Gastrocnemius medialis (tissue), 4 donors: ENCODE measurements at regions of chr7 and their contacts with region 1.

Region 1: GRCh38 chr7:7686811-7687508 is 31.4 kb downstream of the RPA3 start:
- DNase-seq: no peak
- ATAC-seq: no peak
- H3K4me3 ChIP-seq: no peak overlapping the region
- H3K27ac ChIP-seq: peak overlapping the region; percentile 77 to 88 (median 78)
- H3K4me1 ChIP-seq: peaks cover 21 to 44% of the 10 kb centered on the region in 2 donors
- H3K27me3 ChIP-seq: no peaks in the 10 kb centered on the region
- CTCF ChIP-seq: no peak
- POLR2A ChIP-seq: no peak

Region 2: DNA sequence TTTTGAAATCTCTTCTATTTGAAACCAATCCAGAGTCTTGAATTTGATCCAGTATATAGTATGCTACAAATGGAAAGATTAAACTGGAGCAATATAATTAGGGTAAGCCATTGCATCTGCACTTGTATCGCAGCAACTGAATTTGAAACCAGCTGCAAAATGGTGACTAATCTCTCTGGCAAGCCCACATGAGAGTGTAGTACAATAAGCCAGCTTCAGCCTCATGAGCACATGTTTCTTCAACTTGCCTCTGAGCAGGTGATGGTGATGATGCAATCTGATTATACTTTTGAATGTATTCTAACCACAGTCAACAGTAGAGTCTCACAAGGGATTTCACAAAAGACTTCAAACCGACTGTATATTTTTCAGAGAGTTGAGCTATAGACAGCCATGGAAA is 32.3 kb after region 1 on chr7:
- in situ Hi-C with region 1: no loop called
- intact Hi-C with region 1: loop called (anchors 2 kb)
- DNase-seq: peak; percentile 82 to 83
- ATAC-seq: peak; percentile 100
- H3K4me3 ChIP-seq: no peak overlapping the region
- H3K27ac ChIP-seq: peak overlapping the region; percentile 53 to 79 (median 68)
- H3K4me1 ChIP-seq: peaks cover 15 to 21% of the 10 kb centered on the region in 2 donors
- H3K27me3 ChIP-seq: no peaks in the 10 kb centered on the region
- CTCF ChIP-seq: no peak
- POLR2A ChIP-seq: no peak

Region 3: DNA sequence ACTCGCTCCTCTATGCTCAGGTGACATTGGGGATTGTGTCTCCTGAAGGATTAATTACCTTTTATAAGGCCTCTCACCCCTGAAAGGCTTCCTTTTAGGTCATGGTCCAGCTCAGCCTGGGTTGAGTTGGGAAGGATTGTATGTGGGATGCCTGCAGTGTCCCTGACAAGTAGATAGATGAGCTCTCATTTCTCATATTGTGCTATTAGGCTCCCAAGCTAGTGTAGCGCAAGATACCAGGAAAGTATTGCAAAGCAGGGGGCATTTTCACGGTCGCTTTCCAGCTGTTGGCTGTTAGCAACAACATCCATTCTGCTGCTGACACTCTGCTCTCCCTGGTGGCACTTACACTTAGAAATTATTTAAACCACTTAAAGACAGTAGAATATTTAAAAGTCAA is 778.4 kb after region 1 on chr7:
- in situ Hi-C with region 1: no loop called
- intact Hi-C with region 1: no loop called
- DNase-seq: no peak
- ATAC-seq: no peak
- H3K4me3 ChIP-seq: no peak overlapping the region
- H3K27ac ChIP-seq: no peak overlapping the region
- H3K4me1 ChIP-seq: no peaks in the 10 kb centered on the region
- H3K27me3 ChIP-seq: no peaks in the 10 kb centered on the region
- CTCF ChIP-seq: no peak
- POLR2A ChIP-seq: no peak